GM10248 (cell line): ENCODE measurements at regions of chr3 and their contacts with region 1.

Region 1: DNA sequence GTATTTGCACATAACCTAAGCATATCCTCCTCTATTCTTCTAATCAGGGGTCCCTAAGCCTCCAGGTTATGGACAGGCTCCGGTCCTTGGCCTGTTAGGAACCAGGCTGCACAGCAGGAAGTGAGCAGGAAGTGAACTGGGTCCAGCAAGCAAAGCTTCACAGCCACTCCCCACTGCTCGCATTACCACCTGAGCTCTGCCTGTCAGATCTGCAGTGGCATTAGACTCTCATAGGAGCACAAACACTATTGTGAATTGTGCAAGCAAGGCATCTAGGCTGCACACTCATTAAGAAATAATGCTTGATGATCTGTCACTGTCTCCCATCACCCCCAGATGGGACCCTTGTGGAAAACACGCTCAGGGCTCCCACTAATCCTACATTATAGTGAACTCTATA is 9.8 kb downstream of the MSL2 start:
- DNase-seq: no peak
- CTCF ChIP-seq: no peak

Region 2: GRCh38 chr3:135950941-135951340 is 235.4 kb before region 1 on chr3:
- CTCF ChIA-PET with region 1: no interaction called
- POLR2A ChIA-PET with region 1: no interaction called
- DNase-seq: no peak
- CTCF ChIP-seq: no peak

Region 3: DNA sequence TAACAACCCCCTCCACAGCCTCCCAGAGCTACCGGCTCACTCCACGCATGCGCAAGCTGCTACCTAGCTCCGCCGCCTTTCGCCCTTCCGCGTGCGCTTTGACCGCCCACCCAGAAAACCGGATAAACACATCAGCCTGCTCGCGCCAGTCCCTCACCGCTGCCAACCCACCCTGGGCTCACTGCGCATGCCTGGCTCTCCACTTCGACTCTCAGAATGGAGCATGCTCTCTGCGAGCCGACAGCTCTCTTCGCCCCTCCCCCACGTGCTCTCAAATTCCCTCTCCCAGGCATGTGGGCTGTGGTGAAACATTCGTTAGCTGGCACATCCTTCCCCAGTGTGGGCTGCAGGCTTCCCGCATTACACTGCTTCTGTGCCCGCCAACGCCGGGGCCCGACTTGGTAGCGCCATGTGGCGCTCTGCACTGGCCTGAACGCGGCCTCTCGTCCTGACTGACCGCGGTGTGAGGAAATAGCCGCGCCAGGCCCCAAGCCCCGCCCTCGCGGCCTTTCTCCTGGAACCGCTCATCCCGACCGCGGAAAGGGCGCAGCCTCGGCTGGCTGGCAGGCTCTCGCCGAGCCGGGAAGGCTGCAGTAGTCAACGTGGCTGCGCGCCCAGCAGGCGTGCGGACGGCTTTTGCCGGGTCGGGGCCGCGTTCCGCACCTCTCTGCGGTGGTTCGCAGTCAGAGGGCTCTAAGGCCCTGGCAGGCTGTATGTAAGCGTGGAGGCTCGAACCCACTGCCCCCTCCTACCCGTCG is 10.2 kb after region 1 on chr3:
- CTCF ChIA-PET with region 1: interaction called, 13 read pairs
- POLR2A ChIA-PET with region 1: interaction called, 7 read pairs
- DNase-seq: peak; percentile 98
- CTCF ChIP-seq: no peak